ENCODE measurements at regions of chr1 and their contacts with region 1.

Region 1: DNA sequence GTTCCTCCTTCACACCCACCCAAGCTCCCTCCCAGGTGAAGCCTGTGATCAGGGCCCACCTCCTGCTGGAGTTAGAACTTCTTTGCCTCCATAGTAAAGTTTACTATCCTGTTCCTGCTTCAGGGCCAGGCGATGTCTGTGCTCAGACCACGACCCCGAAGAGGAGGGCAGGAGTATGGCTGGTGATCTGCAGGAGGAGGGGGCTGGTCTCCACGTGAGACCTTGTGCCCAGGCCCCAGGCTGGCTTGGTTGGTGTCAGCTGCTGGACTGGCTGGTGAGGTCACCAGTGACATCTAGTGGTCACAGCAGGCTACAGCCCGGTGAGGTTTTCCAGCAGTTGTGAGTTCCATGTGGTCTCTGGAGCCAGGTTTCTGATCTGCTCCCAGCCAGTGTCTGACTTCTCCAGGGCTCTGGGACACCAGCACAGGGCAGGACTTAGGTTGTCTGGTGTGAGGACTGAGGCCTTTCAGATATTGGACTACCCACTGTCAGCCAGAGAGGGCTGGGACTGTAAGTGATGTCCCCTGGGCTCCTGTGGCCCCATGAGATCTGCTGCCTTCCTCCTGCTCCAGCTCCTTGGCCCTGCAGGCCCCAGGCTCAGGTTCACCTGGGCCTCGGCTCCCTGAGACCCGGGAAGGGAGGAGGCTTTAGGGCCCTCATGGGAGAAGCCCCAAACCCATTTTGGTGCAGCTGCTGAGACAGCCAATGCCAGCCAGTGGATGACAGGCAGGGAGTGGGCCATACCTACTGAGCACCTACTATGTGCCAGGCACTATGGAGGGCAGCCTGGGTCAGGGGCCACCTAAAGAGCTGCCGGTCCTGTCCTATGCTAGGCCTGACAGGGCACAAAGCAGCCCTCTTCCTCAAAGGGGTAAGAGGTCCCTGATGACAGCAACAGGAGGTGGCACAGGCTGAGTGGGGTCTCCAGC is 6.0 kb upstream of the UBL4B start:
- DNase-seq: peak; percentile 74
- ATAC-seq: peak; percentile 84
- H3K4me3 Mint-ChIP-seq: no peak overlapping the region
- H3K27ac Mint-ChIP-seq: no peak overlapping the region
- H3K4me1 Mint-ChIP-seq: no peaks in the 10 kb centered on the region
- H3K27me3 Mint-ChIP-seq: peaks cover 23% of the 10 kb centered on the region

Region 2: DNA sequence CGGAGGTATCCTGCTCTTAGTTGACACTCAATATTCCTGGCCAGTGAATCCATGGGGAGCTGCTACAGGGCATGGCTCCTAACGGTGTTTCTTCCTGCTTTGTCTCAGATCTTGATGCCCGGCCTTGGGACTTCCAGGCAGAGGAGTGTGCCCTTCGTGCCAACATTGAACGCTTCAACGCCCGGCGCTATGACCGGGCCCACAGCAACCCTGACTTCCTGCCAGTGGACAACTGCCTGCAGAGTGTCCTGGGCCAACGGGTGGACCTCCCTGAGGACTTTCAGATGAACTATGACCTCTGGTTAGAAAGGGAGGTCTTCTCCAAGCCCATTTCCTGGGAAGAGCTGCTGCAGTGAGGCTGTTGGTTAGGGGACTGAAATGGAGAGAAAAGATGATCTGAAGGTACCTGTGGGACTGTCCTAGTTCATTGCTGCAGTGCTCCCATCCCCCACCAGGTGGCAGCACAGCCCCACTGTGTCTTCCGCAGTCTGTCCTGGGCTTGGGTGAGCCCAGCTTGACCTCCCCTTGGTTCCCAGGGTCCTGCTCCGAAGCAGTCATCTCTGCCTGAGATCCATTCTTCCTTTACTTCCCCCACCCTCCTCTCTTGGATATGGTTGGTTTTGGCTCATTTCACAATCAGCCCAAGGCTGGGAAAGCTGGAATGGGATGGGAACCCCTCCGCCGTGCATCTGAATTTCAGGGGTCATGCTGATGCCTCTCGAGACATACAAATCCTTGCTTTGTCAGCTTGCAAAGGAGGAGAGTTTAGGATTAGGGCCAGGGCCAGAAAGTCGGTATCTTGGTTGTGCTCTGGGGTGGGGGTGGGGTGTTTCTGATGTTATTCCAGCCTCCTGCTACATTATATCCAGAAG is 52.5 kb before region 1 on chr1:
- CTCF ChIA-PET with region 1: interaction called, 29 read pairs
- DNase-seq: peak; percentile 74
- ATAC-seq: peak; percentile 81
- H3K4me3 Mint-ChIP-seq: no peak overlapping the region
- H3K27ac Mint-ChIP-seq: no peak overlapping the region
- H3K4me1 Mint-ChIP-seq: no peaks in the 10 kb centered on the region
- H3K27me3 Mint-ChIP-seq: no peaks in the 10 kb centered on the region

Region 3: DNA sequence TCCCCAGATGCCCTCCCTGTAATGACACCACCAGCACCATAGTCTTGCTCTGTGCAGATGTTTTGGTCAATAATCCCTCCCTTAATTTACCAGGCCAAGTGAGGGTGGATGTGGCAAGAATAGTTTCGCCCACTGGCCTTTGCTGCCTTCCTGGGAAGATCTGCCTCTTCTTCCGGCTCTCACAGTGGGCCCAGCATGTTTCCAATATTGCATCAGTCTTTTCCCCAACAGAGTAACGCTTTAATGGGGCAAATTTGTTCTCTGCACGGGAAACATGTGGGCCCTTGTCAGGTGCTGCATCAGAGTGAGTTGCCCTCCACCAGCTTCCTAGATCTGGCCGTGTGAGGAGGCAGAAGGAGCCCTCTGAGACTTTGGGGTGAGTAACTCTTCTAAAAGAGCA is 23.8 kb before region 1 on chr1:
- CTCF ChIA-PET with region 1: interaction called, 106 read pairs
- DNase-seq: no peak
- ATAC-seq: no peak
- H3K4me3 Mint-ChIP-seq: no peak overlapping the region
- H3K27ac Mint-ChIP-seq: no peak overlapping the region
- H3K4me1 Mint-ChIP-seq: peaks cover 15% of the 10 kb centered on the region
- H3K27me3 Mint-ChIP-seq: peaks cover 57% of the 10 kb centered on the region

Region 4: DNA sequence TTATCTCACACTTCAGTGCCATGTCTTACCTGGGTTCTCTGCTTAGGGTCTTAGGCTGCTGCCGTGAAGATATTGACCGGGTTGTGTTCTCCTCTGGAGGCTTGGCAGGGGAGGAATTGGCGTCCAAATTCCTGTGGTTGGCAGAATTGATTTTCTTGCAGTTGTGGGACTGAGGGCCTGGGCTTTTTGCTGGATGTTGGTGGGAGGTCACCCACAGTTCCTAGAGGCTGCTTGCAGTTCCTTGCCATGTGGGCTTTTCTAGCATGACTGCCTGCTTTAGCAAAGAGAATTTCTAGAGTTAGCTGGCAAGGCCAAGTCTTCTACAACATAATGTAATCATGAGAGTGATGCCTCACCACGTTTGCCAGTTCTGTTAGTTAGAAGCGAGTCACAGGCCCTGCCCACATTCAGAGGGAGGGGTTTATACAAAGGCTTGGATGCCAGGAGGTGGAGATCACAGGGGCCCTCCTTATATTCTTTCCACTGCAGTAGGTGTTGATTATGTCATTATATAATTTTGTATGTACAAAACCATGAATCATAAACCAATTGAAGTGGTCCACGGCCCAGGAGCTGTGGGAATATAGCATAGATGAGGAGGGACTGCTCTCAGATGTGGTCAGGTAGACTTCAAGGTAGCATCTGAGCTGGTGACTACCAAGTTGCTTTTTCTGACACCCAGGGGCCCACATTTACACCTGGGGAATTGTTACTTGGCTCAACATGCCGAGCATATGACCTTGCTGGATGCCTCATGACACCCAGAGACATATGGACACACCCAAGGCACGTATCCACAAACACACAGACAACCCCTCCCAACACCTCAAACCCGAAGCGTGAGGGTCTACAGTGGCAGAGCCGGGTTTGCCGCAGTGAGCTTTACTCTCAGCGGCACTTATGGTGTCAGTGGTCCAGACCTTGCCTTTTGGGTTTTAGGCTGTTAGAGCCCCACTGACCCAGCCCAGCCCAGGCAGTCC is 12.6 kb after region 1 on chr1:
- CTCF ChIA-PET with region 1: interaction called, 17 read pairs
- DNase-seq: no peak
- ATAC-seq: no peak
- H3K4me3 Mint-ChIP-seq: no peak overlapping the region
- H3K27ac Mint-ChIP-seq: no peak overlapping the region
- H3K4me1 Mint-ChIP-seq: no peaks in the 10 kb centered on the region
- H3K27me3 Mint-ChIP-seq: peaks cover 35% of the 10 kb centered on the region

Measured in activated CD8-positive, alpha-beta memory T cell treated with anti-CD3 and anti-CD28 coated beads, Interleukin-2, amount 10 ng/mL, durations not matched to agents 7 days and 5 days (primary cell).